Stomach (tissue), 19 donors: ENCODE measurements at regions of chr14 and their contacts with region 1.

Region 1: GRCh38 chr14:26611259-26611658 is 13.4 kb upstream of the NOVA1 start:
- DNase-seq: no peak
- H3K4me3 ChIP-seq: no peak overlapping the region
- H3K27ac ChIP-seq: no peak overlapping the region
- H3K4me1 ChIP-seq: no peaks in the 10 kb centered on the region
- H3K27me3 ChIP-seq: no peaks in the 10 kb centered on the region
- CTCF ChIP-seq: no peak
- EP300 ChIP-seq: no peak
- POLR2A ChIP-seq: no peak

Region 2: GRCh38 chr14:26538176-26538575 is 73.1 kb before region 1 on chr14:
- intact Hi-C with region 1: no loop called
- DNase-seq: no peak
- H3K4me3 ChIP-seq: no peak overlapping the region
- H3K27ac ChIP-seq: no peak overlapping the region
- H3K4me1 ChIP-seq: no peaks in the 10 kb centered on the region
- H3K27me3 ChIP-seq: no peaks in the 10 kb centered on the region
- CTCF ChIP-seq: no peak
- EP300 ChIP-seq: no peak
- POLR2A ChIP-seq: no peak

Region 3: GRCh38 chr14:26626256-26626655 is 15.0 kb after region 1 on chr14:
- intact Hi-C with region 1: loop called (anchors 2 kb)
- DNase-seq: no peak
- H3K4me3 ChIP-seq: no peak overlapping the region
- H3K27ac ChIP-seq: no peak overlapping the region
- H3K4me1 ChIP-seq: no peaks in the 10 kb centered on the region
- H3K27me3 ChIP-seq: no peaks in the 10 kb centered on the region
- CTCF ChIP-seq: no peak
- EP300 ChIP-seq: no peak
- POLR2A ChIP-seq: no peak

Region 4: DNA sequence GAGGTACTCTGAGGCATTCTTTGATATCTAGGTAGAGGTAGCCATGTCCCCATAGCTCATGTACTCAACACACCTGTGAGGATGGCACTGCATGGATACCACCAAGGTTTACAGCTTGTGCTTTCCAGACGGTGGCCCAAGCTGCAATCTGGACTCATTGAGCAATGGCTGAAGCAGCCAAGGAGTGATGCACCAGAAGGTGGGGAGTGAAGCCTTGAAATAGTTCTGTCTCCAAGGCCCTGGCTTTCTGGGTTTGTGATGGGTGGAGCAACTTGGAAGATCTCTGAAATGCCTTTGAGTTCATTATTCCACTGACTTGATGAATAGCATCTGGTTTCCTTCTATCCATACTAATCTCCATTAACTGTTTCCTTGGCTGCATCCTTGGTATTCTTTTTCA is 276.6 kb after region 1 on chr14:
- intact Hi-C with region 1: no loop called
- DNase-seq: peak in 1 of 2 donors; percentile 4
- H3K4me3 ChIP-seq: no peak overlapping the region
- H3K27ac ChIP-seq: no peak overlapping the region
- H3K4me1 ChIP-seq: no peaks in the 10 kb centered on the region
- H3K27me3 ChIP-seq: no peaks in the 10 kb centered on the region
- CTCF ChIP-seq: no peak
- EP300 ChIP-seq: no peak
- POLR2A ChIP-seq: no peak

Region 5: DNA sequence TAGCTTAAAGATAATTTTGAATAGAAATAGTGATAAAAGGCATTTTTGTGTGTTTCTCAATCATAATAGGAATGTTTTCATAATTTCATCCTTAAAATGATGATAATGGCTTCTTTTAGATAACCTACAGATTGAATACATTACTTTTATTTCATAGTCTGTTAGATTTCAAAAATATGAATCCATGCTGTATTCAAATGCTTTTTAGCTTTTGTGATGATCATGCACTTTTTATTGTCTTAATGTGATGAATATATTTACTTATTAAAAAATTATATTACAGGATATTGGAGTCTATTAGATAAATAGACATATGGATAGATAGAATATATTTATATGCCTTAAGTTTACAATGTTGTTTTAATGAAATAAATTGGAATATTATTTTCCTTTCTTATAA is 873.4 kb after region 1 on chr14:
- intact Hi-C with region 1: no loop called
- DNase-seq: no peak
- H3K4me3 ChIP-seq: no peak overlapping the region
- H3K27ac ChIP-seq: no peak overlapping the region
- H3K4me1 ChIP-seq: no peaks in the 10 kb centered on the region
- H3K27me3 ChIP-seq: no peaks in the 10 kb centered on the region
- CTCF ChIP-seq: no peak
- EP300 ChIP-seq: no peak
- POLR2A ChIP-seq: no peak